Activated CD4-positive, alpha-beta T cell treated with anti-CD3 and anti-CD28 coated beads for 36 hours (primary cell): ENCODE measurements at regions of chr1 and their contacts with region 1.

Region 1: GRCh38 chr1:228500901-228501871 is 14.0 kb downstream of the RNF187 start:
- DNase-seq: peak; percentile 95
- ATAC-seq: peak; percentile 96
- H3K4me3 Mint-ChIP-seq: peak overlapping the region; percentile 58
- H3K27ac Mint-ChIP-seq: peak overlapping the region; percentile 62
- H3K4me1 Mint-ChIP-seq: peaks cover 25% of the 10 kb centered on the region
- H3K27me3 Mint-ChIP-seq: no peaks in the 10 kb centered on the region

Region 2: DNA sequence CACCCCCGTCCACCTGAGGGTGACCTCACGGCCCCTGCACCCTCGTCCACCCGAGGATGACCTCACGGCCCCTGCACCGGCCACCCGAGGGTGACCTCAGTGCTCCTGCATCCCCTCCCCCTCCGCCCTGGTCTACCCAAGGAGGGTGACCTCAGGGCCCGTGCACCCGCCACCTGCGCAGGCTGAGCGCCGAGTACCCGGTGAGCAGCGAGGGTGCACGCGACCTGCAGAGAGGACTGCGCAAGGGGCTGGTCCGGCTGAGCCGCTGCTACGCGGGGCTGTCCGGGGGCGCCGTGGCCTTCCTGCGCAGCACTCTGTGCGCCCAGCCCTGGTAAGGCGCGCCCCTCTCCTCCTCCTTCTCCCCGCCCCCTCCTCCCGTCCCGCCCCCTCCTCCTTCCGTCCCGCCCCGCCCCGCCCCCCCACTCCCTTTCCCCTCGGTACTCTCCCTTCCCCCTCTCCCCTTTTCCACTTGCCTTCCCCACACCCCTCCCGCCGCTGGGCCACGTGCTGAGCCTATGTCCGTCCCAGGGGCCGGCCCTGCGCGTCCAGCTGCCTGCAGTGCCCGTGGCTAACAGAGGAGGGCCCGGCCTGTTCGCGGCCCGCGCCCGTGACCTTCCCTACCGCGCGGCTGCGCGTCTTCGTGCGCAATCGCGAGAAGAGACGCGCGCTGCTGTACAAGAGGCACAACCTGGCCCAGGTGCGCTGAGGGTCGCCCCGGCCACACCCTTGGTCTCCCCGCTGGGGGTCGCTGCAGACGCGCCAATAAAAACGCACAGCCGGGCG is 122.9 kb before region 1 on chr1:
- CTCF ChIA-PET with region 1: interaction called, 6 read pairs
- POLR2A ChIA-PET with region 1: no interaction called
- intact Hi-C with region 1: loop called in 1 of 2 experiments (anchors 1 kb)
- DNase-seq: peak; percentile 84
- ATAC-seq: peak; percentile 77
- H3K4me3 Mint-ChIP-seq: peak overlapping the region; percentile 73
- H3K27ac Mint-ChIP-seq: no peak overlapping the region
- H3K4me1 Mint-ChIP-seq: peaks cover 8% of the 10 kb centered on the region
- H3K27me3 Mint-ChIP-seq: peaks cover 10% of the 10 kb centered on the region

Region 3: DNA sequence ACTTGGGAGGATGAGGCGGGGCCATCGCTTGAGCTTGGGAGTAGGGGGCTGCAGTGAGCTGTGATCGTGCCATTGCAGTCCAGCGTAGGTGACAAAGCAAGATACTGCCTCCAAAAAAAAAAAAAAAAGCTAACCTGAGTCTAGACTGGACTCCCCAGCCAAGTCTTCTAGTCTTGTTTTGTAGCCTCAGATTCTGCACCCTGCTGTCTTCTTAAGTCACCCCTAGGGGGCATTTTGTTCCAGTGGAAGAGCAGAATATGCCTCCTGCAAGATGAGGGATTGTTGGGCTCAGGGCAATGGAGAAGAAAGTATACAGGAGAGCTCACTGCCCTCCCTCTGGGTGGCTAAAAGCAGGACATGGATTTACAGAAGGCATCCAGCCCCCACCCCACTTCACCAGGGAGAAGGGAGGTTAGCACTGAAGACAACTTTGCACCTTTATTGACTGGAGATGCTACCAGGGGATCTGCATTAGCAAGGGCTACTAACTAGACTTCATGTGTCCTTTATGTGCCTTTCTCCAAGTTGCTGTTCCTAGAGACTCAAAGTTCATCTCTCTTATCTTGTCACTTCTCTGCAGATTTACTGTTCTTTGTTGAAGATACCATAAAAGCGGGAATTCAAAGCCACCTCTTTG is 29.3 kb before region 1 on chr1:
- CTCF ChIA-PET with region 1: interaction called, 7 read pairs
- POLR2A ChIA-PET with region 1: no interaction called
- intact Hi-C with region 1: loop called in 1 of 2 experiments (anchors 2 kb)
- DNase-seq: peak; percentile 28
- ATAC-seq: peak; percentile 86
- H3K4me3 Mint-ChIP-seq: no peak overlapping the region
- H3K27ac Mint-ChIP-seq: no peak overlapping the region
- H3K4me1 Mint-ChIP-seq: peaks cover 8% of the 10 kb centered on the region
- H3K27me3 Mint-ChIP-seq: peaks cover 7% of the 10 kb centered on the region

Region 4: DNA sequence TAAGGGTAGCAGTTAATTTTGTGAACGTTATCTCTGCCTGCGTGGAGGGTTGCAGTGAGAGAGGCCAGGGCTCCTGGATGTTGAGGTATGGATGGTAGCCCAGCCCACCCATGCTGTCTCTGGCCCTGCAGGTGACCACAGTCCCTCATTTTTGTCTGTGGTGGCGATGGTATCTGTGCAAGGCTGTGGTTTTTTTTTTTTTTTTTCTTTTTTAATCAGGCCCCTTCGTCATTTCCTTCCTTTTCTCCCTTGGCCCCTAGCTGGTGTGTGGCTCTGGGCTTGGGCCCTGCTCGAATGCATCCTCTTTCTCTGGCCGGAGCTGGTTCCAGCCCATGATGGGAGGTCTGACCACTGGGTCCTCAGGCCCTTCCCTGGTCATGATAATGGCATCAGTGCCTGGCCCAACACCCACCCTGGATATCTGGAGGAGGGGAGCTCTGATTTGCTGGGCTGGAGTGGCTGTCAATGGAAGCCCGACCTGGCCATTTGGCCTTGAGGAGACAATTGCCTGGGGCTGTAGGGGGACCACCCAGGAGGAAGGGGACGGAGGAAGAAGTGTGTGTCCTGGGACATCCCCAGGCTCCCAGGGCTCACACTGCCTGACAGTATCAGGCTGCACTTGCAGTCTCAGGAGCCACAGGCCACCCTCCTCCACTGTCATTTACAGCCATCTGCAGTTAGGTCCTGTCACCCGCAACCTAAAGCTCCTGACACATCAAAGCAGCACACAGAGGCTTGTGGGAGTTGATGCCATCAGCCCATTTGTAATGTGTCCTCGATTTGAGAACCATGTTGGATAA is 22.1 kb before region 1 on chr1:
- CTCF ChIA-PET with region 1: interaction called, 11 read pairs
- POLR2A ChIA-PET with region 1: no interaction called
- intact Hi-C with region 1: no loop called
- DNase-seq: peak; percentile 30
- ATAC-seq: peak; percentile 87
- H3K4me3 Mint-ChIP-seq: no peak overlapping the region
- H3K27ac Mint-ChIP-seq: peak overlapping the region; percentile 59
- H3K4me1 Mint-ChIP-seq: peaks cover 19% of the 10 kb centered on the region
- H3K27me3 Mint-ChIP-seq: no peaks in the 10 kb centered on the region

Region 5: GRCh38 chr1:228486596-228487335 is 14.4 kb before region 1 on chr1:
- CTCF ChIA-PET with region 1: interaction called, 17 read pairs
- POLR2A ChIA-PET with region 1: no interaction called
- intact Hi-C with region 1: loop called (anchors 1 to 2 kb)
- DNase-seq: peak; percentile 87
- ATAC-seq: peak; percentile 66
- H3K4me3 Mint-ChIP-seq: peak overlapping the region; percentile 96
- H3K27ac Mint-ChIP-seq: peak overlapping the region; percentile 99
- H3K4me1 Mint-ChIP-seq: peaks cover 40% of the 10 kb centered on the region
- H3K27me3 Mint-ChIP-seq: no peaks in the 10 kb centered on the region